PC-3 (cell line): ENCODE measurements at regions of chr7 and their contacts with region 1.

Region 1: DNA sequence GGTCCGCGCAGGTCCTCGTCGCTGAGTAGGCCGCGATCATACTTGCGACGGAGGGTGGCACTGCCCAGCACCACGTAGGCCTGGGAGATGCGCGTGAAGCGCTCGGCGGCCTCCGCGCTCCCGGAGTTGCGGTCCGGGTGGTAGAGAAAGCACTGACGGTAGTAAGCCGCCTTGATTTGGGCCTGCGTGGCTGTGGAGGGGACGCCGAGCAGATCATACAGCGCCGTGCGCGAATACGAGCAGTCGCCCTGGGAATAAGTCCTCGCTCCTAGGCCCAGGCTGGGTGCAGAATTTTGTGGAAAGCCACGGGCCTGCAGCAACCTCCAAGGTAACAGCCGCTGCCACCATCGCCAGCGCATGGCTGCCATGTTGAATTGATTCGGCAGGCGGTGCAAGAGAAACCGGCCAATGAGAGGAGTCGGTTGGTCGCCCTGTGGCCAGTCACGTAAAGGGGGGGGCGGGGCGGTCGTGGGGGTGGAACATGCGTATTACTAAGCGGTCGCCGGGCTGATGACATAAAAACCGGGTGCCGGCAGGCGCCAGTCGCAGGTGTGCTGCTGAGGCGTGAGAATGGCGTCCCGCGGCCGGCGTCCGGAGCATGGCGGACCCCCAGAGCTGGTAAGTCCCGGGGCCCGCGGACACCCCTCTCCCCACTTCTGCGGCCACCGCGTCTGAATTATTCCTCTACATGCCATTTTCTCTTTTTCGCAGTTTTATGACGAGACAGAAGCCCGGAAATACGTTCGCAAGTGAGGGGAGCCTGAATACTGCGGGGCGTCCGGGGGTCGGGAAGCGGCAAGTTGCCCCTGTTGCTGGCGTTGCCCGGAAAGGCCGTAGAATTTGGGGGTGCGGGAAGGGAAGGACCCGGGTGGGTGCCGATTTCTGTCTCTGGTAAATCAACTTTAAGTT is at the starts of genes BUD23 and DNAJC30:
- DNase-seq: peak; percentile 86
- ATAC-seq: peak; percentile 83
- H3K4me3 ChIP-seq: peak within 1 kb of the TSS; percentile 97
- H3K27ac ChIP-seq: peak within 1 kb of the TSS; percentile 46
- H3K4me1 ChIP-seq: peaks cover 19% of the 10 kb centered on the region
- H3K27me3 ChIP-seq: no peaks in the 10 kb centered on the region
- CTCF ChIP-seq: no peak
- total RNA-seq, gene BUD23: 124 and 138 TPM in 2 replicates
- total RNA-seq, gene DNAJC30: 2.9 and 4.8 TPM in 2 replicates

Region 2: DNA sequence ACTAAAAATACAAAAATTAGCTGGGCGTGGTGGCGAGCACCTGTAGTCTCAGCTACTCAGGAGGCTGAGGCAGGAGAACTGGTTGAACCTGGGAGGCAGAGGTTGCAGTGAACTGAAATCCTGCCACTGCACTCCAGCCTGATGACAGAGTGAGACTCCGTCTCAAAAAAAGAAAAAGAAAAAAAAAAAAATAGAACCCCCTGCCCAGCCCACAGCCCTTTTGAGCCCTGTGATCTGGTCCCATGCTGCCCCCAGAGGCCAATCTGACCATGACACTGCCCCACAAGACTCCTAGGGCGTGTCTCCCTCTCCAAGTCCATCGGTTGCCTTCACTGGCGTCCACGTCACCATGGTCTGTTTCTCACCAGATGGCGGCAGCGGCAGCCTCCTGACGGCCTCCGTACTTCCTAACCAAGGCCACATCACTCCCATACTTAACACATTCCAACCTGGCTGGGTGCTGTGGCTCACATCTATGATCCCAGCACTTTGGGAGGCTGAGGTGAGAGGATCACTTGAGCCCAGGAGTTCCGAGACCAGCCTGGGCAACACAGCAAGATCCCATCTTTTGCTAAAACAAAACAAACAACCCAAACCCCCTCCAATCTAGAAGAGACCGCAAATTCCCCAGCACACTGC is 18.2 kb after region 1 on chr7:
- CTCF ChIA-PET with region 1: interaction called, 3 read pairs
- POLR2A ChIA-PET with region 1: no interaction called
- intact Hi-C with region 1: loop called (anchors 2 kb)
- DNase-seq: peak; percentile 52
- ATAC-seq: no peak
- H3K4me3 ChIP-seq: no peak overlapping the region
- H3K27ac ChIP-seq: peak overlapping the region; percentile 16; the same call in 1 of the 2 replicates
- H3K4me1 ChIP-seq: peaks cover 24% of the 10 kb centered on the region
- H3K27me3 ChIP-seq: no peaks in the 10 kb centered on the region
- CTCF ChIP-seq: peak; percentile 55

Region 3: DNA sequence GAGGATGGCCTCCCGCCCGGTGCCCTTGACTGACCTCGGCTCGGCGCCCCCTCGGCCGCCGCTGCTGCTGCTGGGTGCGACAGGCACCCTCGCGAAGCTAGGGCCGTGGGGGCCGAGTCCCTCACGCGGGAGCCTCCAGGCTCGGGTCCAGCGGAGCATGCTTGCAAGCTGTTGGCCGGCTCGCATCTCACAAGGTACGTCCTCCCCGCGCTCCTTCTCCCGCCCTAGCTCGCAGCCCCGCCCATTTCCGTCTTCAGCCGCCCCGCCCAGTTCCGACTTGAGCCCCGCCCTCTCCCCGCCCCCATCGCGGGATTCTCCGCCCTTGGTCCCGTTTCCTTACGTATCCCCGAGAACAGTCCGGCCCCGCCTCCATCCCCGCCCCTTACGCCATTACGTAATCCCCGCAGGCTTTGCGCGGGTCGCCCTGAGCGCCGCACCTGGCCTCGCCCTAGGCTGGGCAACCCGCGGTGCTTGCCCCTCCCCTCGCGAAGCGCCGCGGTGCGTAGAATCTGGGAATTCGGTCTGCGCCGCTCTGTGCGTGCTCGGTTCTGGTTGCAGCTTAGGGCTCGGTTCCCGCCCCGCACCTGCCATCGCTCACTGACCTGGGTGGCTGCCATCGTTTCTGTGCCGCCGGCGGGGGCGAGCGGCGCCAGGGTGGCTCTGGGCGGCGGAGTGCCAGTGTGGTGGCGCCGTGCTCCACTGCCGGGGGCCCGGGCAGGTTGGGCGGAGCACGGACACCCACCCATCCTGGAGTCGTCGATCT is 55.5 kb after region 1 on chr7 and contains the start of gene ABHD11:
- CTCF ChIA-PET with region 1: no interaction called
- POLR2A ChIA-PET with region 1: interaction called, 12 read pairs
- intact Hi-C with region 1: no loop called
- DNase-seq: peak; percentile 95
- ATAC-seq: peak; percentile 76
- H3K4me3 ChIP-seq: peak within 1 kb of the TSS; percentile 92
- H3K27ac ChIP-seq: peak within 1 kb of the TSS; percentile 73
- H3K4me1 ChIP-seq: peaks cover 36% of the 10 kb centered on the region
- H3K27me3 ChIP-seq: no peaks in the 10 kb centered on the region
- CTCF ChIP-seq: 0 out of 2 replicates have a peak, but pooled peaks have one; percentile 14
- total RNA-seq, gene ABHD11: 38.6 and 41.4 TPM in 2 replicates